Caco-2 (cell line): ENCODE measurements at regions of chr6 and their contacts with region 1.

Region 1: GRCh38 chr6:150417899-150418826 is 49.4 kb downstream of the IYD start:
- DNase-seq: peak in 1 of 2 experiments; percentile 61
- H3K4me3 ChIP-seq: peak overlapping the region; percentile 55
- H3K4me3 Mint-ChIP-seq: peak overlapping the region; percentile 86
- H3K27ac Mint-ChIP-seq: peak overlapping the region; percentile 95
- H3K4me1 ChIP-seq: no peaks in the 10 kb centered on the region; the same call in 1 of the 2 replicates
- H3K4me1 Mint-ChIP-seq: peaks cover 20% of the 10 kb centered on the region
- H3K27me3 ChIP-seq: no peaks in the 10 kb centered on the region
- H3K27me3 Mint-ChIP-seq: peaks cover 2% of the 10 kb centered on the region
- CTCF ChIP-seq: peak; percentile 70 to 84

Region 2: DNA sequence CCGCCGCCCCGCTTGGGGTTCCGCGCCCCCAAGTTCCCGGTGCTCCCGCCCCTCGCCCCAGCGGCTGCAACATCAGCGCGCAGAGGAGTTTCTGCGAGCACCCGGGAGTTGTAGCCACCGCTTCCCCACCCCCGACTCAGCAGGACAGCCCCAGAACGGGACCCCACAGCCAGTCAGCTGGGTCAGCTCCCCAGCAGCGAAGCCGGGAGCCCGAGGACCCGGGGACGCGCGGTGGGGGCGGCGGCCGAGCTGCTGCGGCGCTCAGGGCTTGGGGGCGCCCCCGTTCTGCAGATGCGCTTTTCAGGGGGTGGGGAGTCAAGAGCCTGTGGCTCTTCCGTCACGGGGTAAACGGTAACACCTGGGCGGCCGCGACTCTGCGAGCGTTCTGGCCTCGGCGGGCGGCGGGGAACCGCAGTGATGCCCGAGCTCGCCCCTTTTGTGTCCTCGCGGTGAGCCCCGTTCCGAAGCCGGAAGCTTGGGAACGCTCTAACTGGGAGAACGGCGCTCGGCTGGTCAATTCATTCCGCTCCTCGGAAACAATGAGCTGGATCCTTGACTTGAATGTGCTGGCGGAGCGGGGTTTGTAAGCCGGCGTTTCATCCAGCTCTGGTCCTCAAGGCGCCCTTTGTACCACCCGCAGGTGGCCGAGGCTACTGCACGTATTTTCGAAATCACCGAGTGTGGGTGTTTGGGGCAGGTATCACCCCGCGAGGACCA is 182.3 kb after region 1 on chr6:
- CTCF ChIA-PET with region 1: interaction called, 19 read pairs
- POLR2A ChIA-PET with region 1: interaction called, 4 read pairs
- intact Hi-C with region 1: loop called (anchors 1 kb)
- DNase-seq: peak; percentile 84 to 85
- H3K4me3 ChIP-seq: peak overlapping the region; percentile 61
- H3K4me3 Mint-ChIP-seq: peak overlapping the region; percentile 88
- H3K27ac Mint-ChIP-seq: peak overlapping the region; percentile 64
- H3K4me1 ChIP-seq: peaks cover 11% of the 10 kb centered on the region; the same call in 1 of the 2 replicates
- H3K4me1 Mint-ChIP-seq: peaks cover 18% of the 10 kb centered on the region
- H3K27me3 ChIP-seq: no peaks in the 10 kb centered on the region
- H3K27me3 Mint-ChIP-seq: no peaks in the 10 kb centered on the region
- CTCF ChIP-seq: peak; percentile 68 to 73

Region 3: GRCh38 chr6:150741633-150742504 is 323.7 kb after region 1 on chr6:
- CTCF ChIA-PET with region 1: interaction called, 6 read pairs
- POLR2A ChIA-PET with region 1: no interaction called
- intact Hi-C with region 1: loop called (anchors 1 kb)
- DNase-seq: peak in 1 of 2 experiments; percentile 34
- H3K4me3 ChIP-seq: no peak overlapping the region
- H3K4me3 Mint-ChIP-seq: peak overlapping the region; percentile 37
- H3K27ac Mint-ChIP-seq: peak overlapping the region; percentile 67
- H3K4me1 ChIP-seq: peaks cover 37% of the 10 kb centered on the region
- H3K4me1 Mint-ChIP-seq: peaks cover 41% of the 10 kb centered on the region
- H3K27me3 ChIP-seq: no peaks in the 10 kb centered on the region
- H3K27me3 Mint-ChIP-seq: no peaks in the 10 kb centered on the region
- CTCF ChIP-seq: peak in 1 of 2 experiments; percentile 37

Region 4: DNA sequence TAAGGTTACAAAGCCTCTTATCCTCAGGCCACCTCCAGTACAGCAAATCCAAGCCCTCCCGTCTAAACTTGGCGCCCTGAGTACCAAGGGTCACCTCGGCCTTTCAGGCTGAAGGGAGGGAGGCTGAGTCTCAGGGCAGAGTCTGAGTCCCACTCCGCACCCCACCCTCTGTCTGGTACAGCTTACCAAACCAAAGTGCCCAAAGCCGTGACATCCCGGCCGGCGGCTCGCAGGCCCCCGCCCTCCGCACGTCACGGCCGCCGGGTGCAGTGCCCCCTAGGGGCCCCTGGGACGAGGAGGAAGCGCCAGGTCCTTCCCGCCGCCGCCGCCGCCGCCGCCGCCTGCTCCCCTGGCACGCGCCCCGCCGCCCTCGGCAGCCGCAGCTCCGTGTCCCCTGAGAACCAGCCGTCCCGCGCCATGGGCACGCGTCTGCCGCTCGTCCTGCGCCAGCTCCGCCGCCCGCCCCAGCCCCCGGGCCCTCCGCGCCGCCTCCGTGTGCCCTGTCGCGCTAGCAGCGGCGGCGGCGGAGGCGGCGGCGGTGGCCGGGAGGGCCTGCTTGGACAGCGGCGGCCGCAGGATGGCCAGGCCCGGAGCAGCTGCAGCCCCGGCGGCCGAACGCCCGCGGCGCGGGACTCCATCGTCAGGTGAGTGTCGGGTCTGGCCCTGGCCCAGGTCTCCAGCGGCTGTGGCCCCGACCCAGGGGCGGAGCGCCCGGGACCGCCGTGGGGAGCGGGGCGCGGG is 447.4 kb after region 1 on chr6 and contains the start of gene MTHFD1L:
- CTCF ChIA-PET with region 1: no interaction called
- POLR2A ChIA-PET with region 1: no interaction called
- intact Hi-C with region 1: loop called (anchors 5 kb)
- DNase-seq: peak; percentile 81 to 88
- H3K4me3 ChIP-seq: peak within 1 kb of the TSS; percentile 85
- H3K4me3 Mint-ChIP-seq: peak within 1 kb of the TSS; percentile 94
- H3K27ac Mint-ChIP-seq: peak within 1 kb of the TSS; percentile 73
- H3K4me1 ChIP-seq: no peaks in the 10 kb centered on the region
- H3K4me1 Mint-ChIP-seq: no peaks in the 10 kb centered on the region
- H3K27me3 ChIP-seq: no peaks in the 10 kb centered on the region
- H3K27me3 Mint-ChIP-seq: no peaks in the 10 kb centered on the region
- CTCF ChIP-seq: peak in 1 of 2 experiments; percentile 55
- total RNA-seq, gene MTHFD1L: 101 and 102 TPM in 2 replicates